Right ventricle myocardium inferior (tissue), 1 donor: ENCODE measurements at regions of chr6 and their contacts with region 1.

Region 1: GRCh38 chr6:14130435-14131075 is 13.0 kb downstream of the CD83 start:
- DNase-seq: no peak
- ATAC-seq: no peak

Region 2: DNA sequence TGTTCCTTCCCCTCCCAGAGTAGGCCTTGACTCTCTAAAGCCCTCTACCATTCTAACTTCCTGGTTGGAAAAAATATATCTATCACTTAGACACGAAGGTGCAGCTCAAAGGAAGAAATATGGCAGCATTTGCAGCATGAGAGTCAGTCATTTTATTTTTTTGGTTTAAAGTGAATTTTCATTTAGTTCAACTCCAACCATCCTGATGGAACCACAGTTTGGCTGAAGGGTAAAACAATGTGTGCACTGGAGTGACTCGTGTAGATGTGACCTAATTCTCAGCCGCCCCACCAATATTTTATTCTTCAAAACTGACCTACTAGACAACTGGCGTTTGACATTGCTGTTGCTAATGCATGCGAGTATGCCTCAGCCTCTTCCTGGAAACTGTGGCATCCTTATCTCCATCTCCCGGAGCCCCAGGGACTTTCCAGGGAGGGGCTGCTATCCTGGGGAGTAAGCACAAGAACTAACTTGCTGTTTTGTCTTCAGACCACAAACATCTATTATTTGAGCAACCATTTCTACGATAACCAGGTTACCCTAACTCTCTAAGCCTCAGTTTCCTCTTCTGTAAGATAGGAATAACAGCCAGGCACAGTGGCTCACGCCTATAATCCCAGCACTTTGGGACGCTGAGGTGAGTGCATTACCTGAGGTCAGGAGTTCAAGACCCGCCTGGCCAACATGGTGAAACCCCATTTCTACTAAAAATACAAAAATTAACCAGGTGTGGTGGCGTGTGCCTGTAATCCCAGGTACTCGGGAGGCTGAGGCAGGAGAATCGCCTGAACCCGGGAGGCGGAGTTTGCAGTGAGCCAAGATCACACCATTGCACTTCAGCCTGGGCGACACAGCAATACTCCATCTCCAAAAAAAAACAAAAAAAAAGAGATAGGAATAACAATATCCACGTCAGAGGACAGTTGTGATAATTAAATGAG is 966.6 kb after region 1 on chr6:
- intact Hi-C with region 1: no loop called
- DNase-seq: no peak
- ATAC-seq: no peak

Region 3: GRCh38 chr6:15491255-15491985 is 1360.9 kb after region 1 on chr6:
- intact Hi-C with region 1: loop called (anchors 10 kb)
- DNase-seq: no peak
- ATAC-seq: peak; percentile 76